Astrocyte of the cerebellum (primary cell): ENCODE measurements at regions of chrX and their contacts with region 1.

Region 1: DNA sequence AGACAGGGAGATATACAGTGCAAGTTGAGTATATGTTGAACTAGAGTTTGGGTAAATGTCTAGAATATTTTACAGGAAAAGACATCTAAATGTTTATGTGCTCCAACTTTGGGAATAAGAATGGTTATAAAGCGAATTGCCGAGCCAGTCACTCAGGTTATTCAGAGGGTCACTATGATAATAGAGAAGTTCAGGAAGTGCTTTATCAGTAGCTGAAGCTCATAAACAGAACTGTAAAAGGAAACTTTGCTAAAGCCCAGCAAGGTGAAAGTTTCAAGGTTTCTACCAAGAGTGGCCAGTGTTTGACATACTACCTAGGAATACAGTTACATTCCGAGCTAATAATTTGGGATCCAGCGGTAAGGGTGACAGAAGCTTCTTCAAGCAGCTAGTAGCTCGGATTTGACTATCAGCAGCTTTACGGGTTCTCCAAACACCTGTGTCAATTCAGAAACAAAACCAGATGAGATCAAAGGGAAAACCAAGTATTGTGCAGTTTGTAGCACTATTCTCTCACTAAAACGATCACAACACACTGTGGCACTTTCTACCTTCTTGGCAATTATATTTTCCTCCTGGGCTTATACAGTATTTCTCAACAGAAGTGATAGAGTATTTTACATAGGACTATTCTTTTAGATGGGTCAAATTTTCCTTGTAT is 17.2 kb upstream of the BCLAF3 start:
- DNase-seq: no peak
- H3K4me3 ChIP-seq: no peak overlapping the region
- CTCF ChIP-seq: no peak

Region 2: GRCh38 chrX:19964017-19964710 is 43.9 kb before region 1 on chrX:
- in situ Hi-C with region 1: loop called (anchors 5 kb)
- DNase-seq: no peak
- H3K4me3 ChIP-seq: no peak overlapping the region
- CTCF ChIP-seq: no peak

Region 3: DNA sequence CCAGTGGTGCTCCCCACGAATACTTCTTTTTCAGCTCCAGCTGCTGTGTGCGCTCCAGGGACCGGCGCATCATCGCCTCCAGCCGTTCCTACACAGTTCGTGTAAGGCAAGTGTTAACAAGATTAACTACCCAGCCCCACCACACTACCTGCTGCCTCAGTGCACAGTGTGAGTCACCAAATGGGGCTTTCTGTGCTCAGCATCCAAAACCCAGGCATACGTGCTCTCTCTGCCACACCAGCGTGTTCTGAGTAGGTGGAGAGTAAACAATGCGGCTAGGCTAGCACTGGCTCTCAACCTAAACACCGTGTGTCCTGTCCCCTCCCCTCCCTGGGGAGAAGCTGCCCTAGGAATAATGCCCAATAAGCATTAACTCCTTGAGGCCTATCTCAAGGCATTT is 48.6 kb after region 1 on chrX:
- in situ Hi-C with region 1: no loop called
- DNase-seq: no peak
- H3K4me3 ChIP-seq: no peak overlapping the region
- CTCF ChIP-seq: no peak